Activated B cell treated with CpG ODN at 0.5 μM for 24 hours (primary cell): ENCODE measurements at regions of chr3 and their contacts with region 1.

Region 1: DNA sequence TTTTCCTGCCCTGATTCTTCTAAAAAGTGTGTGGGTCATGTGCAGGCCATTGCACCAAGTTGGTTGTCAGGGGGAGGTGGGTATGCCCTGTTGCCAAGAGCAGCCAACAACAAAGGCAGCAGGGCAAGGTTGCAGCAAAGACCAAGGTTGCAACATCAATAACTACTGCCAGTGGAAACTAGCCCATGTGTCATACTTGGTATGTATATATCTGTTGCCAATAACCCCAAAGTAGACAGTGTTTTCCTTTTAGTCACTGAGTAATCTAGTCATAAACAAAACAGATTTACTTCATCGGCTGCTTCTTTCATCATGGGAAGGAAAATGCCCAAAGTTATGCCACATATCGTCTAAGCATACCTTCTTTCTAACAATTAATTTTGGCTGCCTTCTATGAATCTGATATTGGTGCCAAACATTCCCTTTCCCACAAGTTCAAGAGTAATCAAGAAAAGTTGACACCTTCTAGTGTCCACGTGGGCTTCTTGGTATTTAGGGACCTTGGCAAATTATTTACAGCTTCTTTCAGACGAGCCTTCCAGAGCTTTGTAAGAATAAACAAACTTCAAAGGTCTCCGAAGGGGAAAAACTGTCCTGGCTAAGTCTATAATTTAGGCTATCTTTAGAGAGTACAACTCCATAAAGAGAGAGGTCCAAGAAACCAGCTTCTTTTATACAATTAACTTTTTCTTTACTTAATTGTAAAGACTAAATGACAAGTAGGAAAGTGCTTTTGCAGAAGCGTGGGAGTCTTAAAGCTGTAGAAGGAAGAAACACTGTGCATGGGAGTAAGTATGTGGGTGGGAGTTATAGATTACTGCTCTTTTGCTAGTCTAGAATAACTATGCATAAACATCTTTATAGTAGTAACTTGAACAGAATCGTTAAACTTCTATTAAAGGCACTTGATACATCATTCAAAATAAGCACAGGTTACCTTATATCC is 10.0 kb upstream of the MBNL1 start:
- DNase-seq: no peak
- ATAC-seq: peak; percentile 23
- H3K4me3 Mint-ChIP-seq: peak overlapping the region; percentile 39
- H3K27ac Mint-ChIP-seq: peak overlapping the region; percentile 86
- H3K4me1 Mint-ChIP-seq: peaks cover 79% of the 10 kb centered on the region
- H3K27me3 Mint-ChIP-seq: no peaks in the 10 kb centered on the region
- CTCF ChIP-seq: no peak

Region 2: GRCh38 chr3:151979906-151980305 is 278.8 kb before region 1 on chr3:
- CTCF ChIA-PET with region 1: no interaction called
- POLR2A ChIA-PET with region 1: no interaction called
- intact Hi-C with region 1: no loop called
- DNase-seq: no peak
- ATAC-seq: no peak
- H3K4me3 Mint-ChIP-seq: no peak overlapping the region
- H3K27ac Mint-ChIP-seq: no peak overlapping the region
- H3K4me1 Mint-ChIP-seq: no peaks in the 10 kb centered on the region
- H3K27me3 Mint-ChIP-seq: peaks cover 4% of the 10 kb centered on the region
- CTCF ChIP-seq: no peak

Region 3: GRCh38 chr3:152205097-152205593 is 53.6 kb before region 1 on chr3:
- CTCF ChIA-PET with region 1: no interaction called
- POLR2A ChIA-PET with region 1: interaction called, 11 read pairs
- intact Hi-C with region 1: loop called (anchors 1 kb)
- DNase-seq: no peak
- ATAC-seq: peak; percentile 72
- H3K4me3 Mint-ChIP-seq: peak overlapping the region; percentile 95
- H3K27ac Mint-ChIP-seq: peak overlapping the region; percentile 99
- H3K4me1 Mint-ChIP-seq: peaks cover 58% of the 10 kb centered on the region
- H3K27me3 Mint-ChIP-seq: no peaks in the 10 kb centered on the region
- CTCF ChIP-seq: no peak

Region 4: GRCh38 chr3:152241142-152242017 is 17.3 kb before region 1 on chr3:
- CTCF ChIA-PET with region 1: interaction called, 4 read pairs
- POLR2A ChIA-PET with region 1: interaction called, 51 read pairs
- intact Hi-C with region 1: loop called (anchors 1 kb)
- DNase-seq: no peak
- ATAC-seq: no peak
- H3K4me3 Mint-ChIP-seq: peak overlapping the region; percentile 62
- H3K27ac Mint-ChIP-seq: peak overlapping the region; percentile 90
- H3K4me1 Mint-ChIP-seq: peaks cover 77% of the 10 kb centered on the region
- H3K27me3 Mint-ChIP-seq: no peaks in the 10 kb centered on the region
- CTCF ChIP-seq: no peak

Region 5: DNA sequence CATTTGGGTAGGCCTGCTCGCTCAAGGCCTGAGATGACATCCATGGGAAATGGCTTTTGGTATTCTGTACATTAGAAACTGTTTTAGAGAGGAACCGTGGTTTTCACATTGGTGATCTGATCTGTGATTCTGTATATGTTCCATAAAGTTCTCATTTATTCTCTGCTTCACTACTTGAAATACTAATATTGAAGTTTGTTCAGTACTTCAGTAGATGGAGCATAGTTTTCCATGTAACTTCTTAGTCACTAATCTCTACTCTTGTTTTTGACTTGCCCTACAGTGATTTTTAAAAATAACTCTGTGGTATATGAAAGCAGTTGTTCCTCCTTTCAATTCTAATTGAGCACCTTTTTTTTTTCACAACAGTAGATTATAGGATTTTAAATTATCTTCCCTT is 76.6 kb after region 1 on chr3:
- CTCF ChIA-PET with region 1: no interaction called
- POLR2A ChIA-PET with region 1: no interaction called
- intact Hi-C with region 1: no loop called
- DNase-seq: no peak
- ATAC-seq: peak; percentile 30
- H3K4me3 Mint-ChIP-seq: peak overlapping the region; percentile 38
- H3K27ac Mint-ChIP-seq: peak overlapping the region; percentile 24
- H3K4me1 Mint-ChIP-seq: peaks cover 80% of the 10 kb centered on the region
- H3K27me3 Mint-ChIP-seq: no peaks in the 10 kb centered on the region
- CTCF ChIP-seq: no peak